HEK293 (cell line): ENCODE measurements at regions of chrX and their contacts with region 1.

Region 1: GRCh38 chrX:46953597-46953996 is 41.4 kb downstream of the JADE3 start:
- H3K4me3 ChIP-seq: no peak overlapping the region
- H3K27ac ChIP-seq: no peak overlapping the region
- H3K4me1 ChIP-seq: peaks cover 11% of the 10 kb centered on the region; the same call in 1 of the 2 replicates
- CTCF ChIP-seq: no peak

Region 2: GRCh38 chrX:46642145-46642544 is 311.5 kb before region 1 on chrX:
- CTCF ChIA-PET with region 1: no interaction called
- POLR2A ChIA-PET with region 1: no interaction called
- H3K4me3 ChIP-seq: no peak overlapping the region
- H3K27ac ChIP-seq: no peak overlapping the region
- H3K4me1 ChIP-seq: no peaks in the 10 kb centered on the region
- CTCF ChIP-seq: no peak

Region 3: DNA sequence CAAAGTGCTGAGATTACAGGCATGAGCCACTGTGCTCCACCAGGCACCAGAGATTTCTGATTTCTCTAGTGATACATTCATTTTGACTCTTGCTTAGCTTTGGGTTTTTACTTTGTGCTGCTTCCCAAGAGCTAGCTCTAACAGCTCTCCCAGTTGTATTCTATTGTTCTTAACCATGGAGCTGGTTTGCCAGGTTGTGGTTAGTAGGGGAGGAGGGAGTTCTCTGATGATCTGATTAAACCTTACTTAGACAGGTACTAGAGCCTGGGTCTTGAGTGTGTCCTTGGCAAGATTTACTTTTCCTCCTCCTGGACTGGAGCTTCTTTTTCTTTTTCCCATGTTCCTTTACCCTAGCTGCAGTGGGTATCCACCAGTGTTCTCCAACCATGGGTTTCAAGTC is 29.9 kb before region 1 on chrX:
- CTCF ChIA-PET with region 1: no interaction called
- POLR2A ChIA-PET with region 1: interaction called, 13 read pairs
- H3K4me3 ChIP-seq: no peak overlapping the region
- H3K27ac ChIP-seq: no peak overlapping the region
- H3K4me1 ChIP-seq: no peaks in the 10 kb centered on the region
- CTCF ChIP-seq: no peak

Region 4: DNA sequence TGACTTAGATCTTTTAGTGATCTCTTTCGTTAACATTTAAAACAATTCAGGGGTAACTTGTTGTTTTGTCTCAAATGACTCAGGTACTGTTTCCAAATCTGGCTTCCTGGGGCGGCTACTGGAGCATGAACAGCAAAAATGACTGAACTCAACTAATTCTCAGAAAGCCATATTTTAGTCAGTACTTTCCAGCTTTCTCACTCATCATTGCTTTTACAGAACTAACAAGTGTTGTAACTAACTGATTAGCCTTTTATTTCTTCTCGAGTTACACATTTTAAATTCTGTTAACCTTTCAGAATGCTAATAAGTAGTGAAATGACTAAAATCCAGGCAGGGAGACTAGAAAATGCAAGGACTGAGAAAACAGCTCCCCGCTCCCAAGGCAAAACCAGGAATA is 13.9 kb after region 1 on chrX:
- CTCF ChIA-PET with region 1: no interaction called
- POLR2A ChIA-PET with region 1: no interaction called
- H3K4me3 ChIP-seq: no peak overlapping the region
- H3K27ac ChIP-seq: peak overlapping the region; percentile 27; the same call in 1 of the 2 replicates
- H3K4me1 ChIP-seq: peaks cover 3% of the 10 kb centered on the region; the same call in 1 of the 2 replicates
- CTCF ChIP-seq: no peak